ENCODE measurements at regions of chr1 and their contacts with region 1.

Region 1: DNA sequence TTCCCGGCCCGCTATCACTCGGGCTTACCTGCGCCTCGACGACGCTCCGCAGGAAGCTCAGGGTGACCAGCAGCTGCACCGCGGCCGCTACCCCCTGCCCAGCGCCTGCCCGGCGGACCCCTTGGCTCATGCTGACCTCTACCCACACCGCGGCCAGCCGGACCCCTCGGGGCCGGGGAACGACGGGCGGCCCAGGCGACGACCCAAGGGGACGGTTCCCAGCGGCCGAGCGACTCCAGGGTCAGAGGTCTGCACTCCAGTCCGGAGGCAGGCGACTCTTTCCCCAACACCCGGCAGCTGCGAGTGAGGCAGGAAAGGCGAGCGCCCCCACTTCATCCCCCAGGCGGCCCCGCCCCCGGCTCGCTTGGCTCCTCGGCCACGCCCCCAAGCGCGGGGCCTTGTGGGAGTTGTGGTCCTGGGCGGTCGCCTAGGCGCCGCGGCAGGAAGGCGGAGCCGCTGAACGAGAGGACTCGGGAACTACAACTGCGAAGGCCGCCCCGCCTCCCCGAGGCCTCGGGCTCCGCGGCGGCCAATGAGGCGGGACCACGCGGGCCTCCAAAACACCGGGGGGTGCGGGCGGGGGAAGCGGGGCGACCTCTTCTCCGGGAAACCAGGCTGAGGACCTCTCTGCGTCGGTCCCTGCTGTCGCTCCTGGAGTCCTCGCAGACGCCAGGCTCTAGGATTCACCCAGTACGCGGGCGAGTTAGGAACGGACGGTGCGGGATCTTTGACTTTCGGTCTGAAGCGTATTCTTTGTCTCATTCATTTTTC is at the start of gene ERO1B:
- DNase-seq: peak; percentile 99
- ATAC-seq: peak; percentile 91 to 99 (median 94)
- H3K4me3 ChIP-seq: peak within 1 kb of the TSS; percentile 91
- H3K4me3 Mint-ChIP-seq: peak within 1 kb of the TSS; percentile 57
- H3K27ac ChIP-seq: peak within 1 kb of the TSS; percentile 82
- H3K27ac Mint-ChIP-seq: peak within 1 kb of the TSS; percentile 74 to 92
- H3K4me1 ChIP-seq: peaks cover 12% of the 10 kb centered on the region
- H3K4me1 Mint-ChIP-seq: peaks cover 11 to 23% of the 10 kb centered on the region in 2 donors
- H3K27me3 ChIP-seq: peaks cover 4% of the 10 kb centered on the region
- H3K27me3 Mint-ChIP-seq: peaks cover 18 to 23% of the 10 kb centered on the region in 2 donors
- CTCF ChIP-seq: no peak
- total RNA-seq, gene ERO1B: 14.7 to 17.8 (median 16.5) TPM

Region 2: DNA sequence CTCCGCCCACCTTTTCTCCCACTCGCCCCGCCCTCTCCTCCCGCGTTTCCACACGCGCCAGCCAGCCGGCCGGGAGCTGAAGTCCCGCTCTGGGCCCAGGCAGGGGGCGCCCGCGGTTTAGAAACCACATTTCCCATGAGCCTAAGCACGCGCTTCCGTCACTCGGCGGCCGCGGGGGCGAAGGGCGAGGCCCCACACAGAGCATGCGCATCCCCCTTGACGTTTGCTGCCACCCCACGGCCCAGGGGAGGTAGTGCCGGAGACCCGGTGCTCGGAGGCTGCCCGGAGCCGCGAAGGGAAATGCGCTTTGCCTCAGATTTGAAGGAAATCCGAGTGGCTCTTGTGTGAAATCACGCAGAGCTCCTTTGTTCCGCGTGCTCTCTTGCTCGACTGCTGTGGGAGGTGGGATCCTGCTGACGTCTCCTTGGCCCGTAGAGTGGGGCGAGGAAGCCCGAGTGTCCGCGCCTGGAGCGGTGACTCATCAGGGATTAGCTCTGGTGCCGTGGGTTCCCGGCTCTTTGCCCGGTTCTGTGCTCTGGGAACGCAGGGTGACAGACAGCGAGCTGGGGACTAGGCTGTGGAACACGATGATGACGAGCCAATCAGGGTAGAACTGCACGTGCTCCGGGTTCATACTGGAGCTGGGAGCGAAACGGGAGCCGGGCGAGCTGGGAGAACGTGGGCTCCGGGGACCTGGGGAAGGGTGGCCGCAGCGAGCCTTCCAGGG is 777.2 kb before region 1 on chr1:
- intact Hi-C with region 1: loop called (anchors 10 kb)
- DNase-seq: peak; percentile 95 to 99
- ATAC-seq: peak; percentile 85 to 97 (median 90)
- H3K4me3 ChIP-seq: peak overlapping the region; percentile 98
- H3K4me3 Mint-ChIP-seq: peak overlapping the region; percentile 98
- H3K27ac ChIP-seq: peak overlapping the region; percentile 96
- H3K27ac Mint-ChIP-seq: peak overlapping the region; percentile 96 to 98
- H3K4me1 ChIP-seq: peaks cover 11% of the 10 kb centered on the region
- H3K4me1 Mint-ChIP-seq: peaks cover 21 to 26% of the 10 kb centered on the region in 2 donors
- H3K27me3 ChIP-seq: no peaks in the 10 kb centered on the region
- H3K27me3 Mint-ChIP-seq: peaks cover 0 to 5% of the 10 kb centered on the region in 2 donors
- CTCF ChIP-seq: peak; percentile 73

Region 3: GRCh38 chr1:236142253-236143103 is 139.4 kb before region 1 on chr1 and contains the start of gene GPR137B:
- intact Hi-C with region 1: loop called (anchors 5 kb)
- DNase-seq: peak; percentile 55 to 75
- ATAC-seq: peak; percentile 75 to 85 (median 84)
- H3K4me3 ChIP-seq: peak within 1 kb of the TSS; percentile 78
- H3K4me3 Mint-ChIP-seq: peak within 1 kb of the TSS; percentile 95
- H3K27ac ChIP-seq: no peak within 1 kb of the TSS
- H3K27ac Mint-ChIP-seq: peak within 1 kb of the TSS; percentile 32 to 91
- H3K4me1 ChIP-seq: peaks cover 30% of the 10 kb centered on the region
- H3K4me1 Mint-ChIP-seq: peaks cover 40 to 62% of the 10 kb centered on the region in 2 donors
- H3K27me3 ChIP-seq: peaks cover 13% of the 10 kb centered on the region
- H3K27me3 Mint-ChIP-seq: peaks cover 25 to 30% of the 10 kb centered on the region in 2 donors
- CTCF ChIP-seq: no peak
- total RNA-seq, gene GPR137B: 13.3 to 13.8 (median 13.5) TPM

Region 4: GRCh38 chr1:236394905-236395780 is 113.3 kb after region 1 on chr1:
- intact Hi-C with region 1: loop called (anchors 10 kb)
- DNase-seq: peak; percentile 41 to 70
- ATAC-seq: peak; percentile 76 to 82 (median 79)
- H3K4me3 ChIP-seq: peak overlapping the region; percentile 60
- H3K4me3 Mint-ChIP-seq: peak overlapping the region; percentile 95
- H3K27ac ChIP-seq: peak overlapping the region; percentile 38
- H3K27ac Mint-ChIP-seq: peak overlapping the region; percentile 69 to 84
- H3K4me1 ChIP-seq: peaks cover 26% of the 10 kb centered on the region
- H3K4me1 Mint-ChIP-seq: peaks cover 29 to 38% of the 10 kb centered on the region in 2 donors
- H3K27me3 ChIP-seq: no peaks in the 10 kb centered on the region
- H3K27me3 Mint-ChIP-seq: peaks cover 20 to 28% of the 10 kb centered on the region in 2 donors
- CTCF ChIP-seq: no peak

Region 5: DNA sequence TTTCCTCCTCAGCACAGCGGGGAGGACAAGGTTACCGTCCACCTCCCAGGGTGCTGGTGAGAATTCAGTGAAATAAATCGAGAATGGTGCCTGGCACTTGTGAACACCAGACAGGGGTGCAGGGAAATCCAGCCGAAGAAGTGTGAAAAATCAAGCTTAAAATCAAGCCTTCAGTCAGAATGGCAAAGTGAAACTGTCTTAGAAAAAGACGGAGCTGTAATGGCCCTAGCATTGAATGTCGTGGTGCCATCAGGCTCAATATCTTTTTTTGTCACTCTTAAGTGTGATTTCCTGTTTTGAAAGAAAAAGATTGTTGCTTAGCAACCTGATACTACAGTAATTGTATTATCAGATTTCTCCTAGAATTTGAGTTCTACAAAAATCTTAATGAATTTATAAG is 134.3 kb after region 1 on chr1:
- intact Hi-C with region 1: loop called (anchors 2 kb)
- DNase-seq: peak; percentile 53 to 89
- ATAC-seq: peak; percentile 91 to 93 (median 91)
- H3K4me3 ChIP-seq: peak overlapping the region; percentile 23
- H3K4me3 Mint-ChIP-seq: peak overlapping the region; percentile 86
- H3K27ac ChIP-seq: peak overlapping the region; percentile 98
- H3K27ac Mint-ChIP-seq: peak overlapping the region; percentile 93 to 99
- H3K4me1 ChIP-seq: peaks cover 26% of the 10 kb centered on the region
- H3K4me1 Mint-ChIP-seq: peaks cover 17 to 28% of the 10 kb centered on the region in 2 donors
- H3K27me3 ChIP-seq: no peaks in the 10 kb centered on the region
- H3K27me3 Mint-ChIP-seq: no peaks in the 10 kb centered on the region
- CTCF ChIP-seq: no peak

Region 6: GRCh38 chr1:236457775-236458174 is 175.9 kb after region 1 on chr1:
- intact Hi-C with region 1: no loop called
- DNase-seq: no peak
- ATAC-seq: no peak
- H3K4me3 ChIP-seq: no peak overlapping the region
- H3K4me3 Mint-ChIP-seq: no peak overlapping the region
- H3K27ac ChIP-seq: no peak overlapping the region
- H3K27ac Mint-ChIP-seq: no peak overlapping the region
- H3K4me1 ChIP-seq: no peaks in the 10 kb centered on the region
- H3K4me1 Mint-ChIP-seq: no peaks in the 10 kb centered on the region
- H3K27me3 ChIP-seq: no peaks in the 10 kb centered on the region
- H3K27me3 Mint-ChIP-seq: no peaks in the 10 kb centered on the region
- CTCF ChIP-seq: no peak

Region 7: DNA sequence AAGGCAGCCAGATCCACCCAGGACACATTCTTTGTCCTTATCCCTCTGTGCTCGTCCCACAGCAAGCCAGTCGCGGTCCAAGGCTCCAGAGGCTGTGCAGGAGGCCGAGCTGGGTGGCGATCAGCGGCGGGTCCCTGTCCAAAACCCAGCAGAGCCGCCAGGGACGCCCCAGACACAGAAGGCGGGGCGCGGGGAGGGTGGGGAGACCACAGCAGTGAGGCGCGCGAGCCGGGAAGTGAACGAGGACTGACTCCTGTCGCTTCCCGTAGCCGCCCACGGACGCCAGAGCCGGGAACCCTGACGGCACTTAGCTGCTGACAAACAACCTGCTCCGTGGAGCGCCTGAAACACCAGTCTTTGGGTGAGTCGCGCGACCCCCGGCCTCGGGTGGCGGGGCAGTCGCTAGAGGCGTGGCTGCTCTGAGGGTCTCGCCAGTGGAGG is 241.9 kb after region 1 on chr1 and contains the start of gene LGALS8:
- intact Hi-C with region 1: loop called (anchors 1 kb)
- DNase-seq: peak; percentile 76 to 92
- ATAC-seq: peak; percentile 79 to 85 (median 82)
- H3K4me3 ChIP-seq: peak within 1 kb of the TSS; percentile 97
- H3K4me3 Mint-ChIP-seq: peak within 1 kb of the TSS; percentile 99
- H3K27ac ChIP-seq: peak within 1 kb of the TSS; percentile 76
- H3K27ac Mint-ChIP-seq: peak within 1 kb of the TSS; percentile 97 to 98
- H3K4me1 ChIP-seq: peaks cover 11% of the 10 kb centered on the region
- H3K4me1 Mint-ChIP-seq: peaks cover 9 to 21% of the 10 kb centered on the region in 2 donors
- H3K27me3 ChIP-seq: no peaks in the 10 kb centered on the region
- H3K27me3 Mint-ChIP-seq: peaks cover 0 to 9% of the 10 kb centered on the region in 2 donors
- CTCF ChIP-seq: no peak
- total RNA-seq, gene LGALS8: 90.5 to 129 (median 114) TPM

Measured in natural killer cell (primary cell).